Activated CD4-positive, alpha-beta T cell treated with anti-CD3 and anti-CD28 coated beads for 36 hours (primary cell): ENCODE measurements at regions of chr14 and their contacts with region 1.

Region 1: DNA sequence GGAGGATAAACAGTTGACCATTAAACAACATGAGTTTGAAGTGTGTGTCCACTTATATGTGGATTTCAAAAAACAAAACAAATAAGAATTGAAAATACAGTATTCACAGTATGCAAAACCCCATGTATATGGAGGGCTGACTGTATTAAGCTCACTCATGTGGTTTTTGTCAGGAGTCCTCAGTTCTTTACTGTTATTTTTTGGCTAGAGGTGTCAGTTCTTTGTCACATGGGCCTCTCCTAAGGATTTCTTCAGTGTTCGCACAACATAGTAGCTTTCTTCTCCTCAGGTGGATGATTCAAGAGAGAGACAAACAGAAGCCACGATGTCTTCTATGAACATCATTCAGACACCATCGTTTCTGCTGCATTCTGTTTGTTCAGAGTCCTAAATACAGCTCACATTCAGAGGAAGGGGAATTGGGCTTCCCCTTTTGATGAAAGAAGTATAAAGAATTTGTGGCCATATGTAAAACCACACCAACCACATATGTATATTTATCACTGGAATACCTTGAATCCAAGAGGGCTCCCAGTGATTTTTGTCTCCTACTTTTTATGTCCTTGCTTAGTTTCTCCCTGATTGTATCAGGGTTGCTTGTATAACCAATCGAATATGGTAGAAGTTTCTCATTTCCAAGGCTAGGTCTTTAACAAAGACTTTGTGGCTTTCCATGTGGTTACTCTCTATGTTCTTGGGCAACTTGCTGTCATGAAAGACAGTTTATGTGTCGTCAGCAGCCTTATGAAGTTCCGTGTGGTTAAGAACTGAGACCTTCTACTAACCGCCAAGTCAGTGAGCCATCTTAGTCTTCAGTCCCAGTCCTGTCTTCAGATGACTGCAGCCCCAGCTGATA is 18.9 kb downstream of the MNAT1 start:
- DNase-seq: peak; percentile 71
- ATAC-seq: peak; percentile 94
- H3K4me3 Mint-ChIP-seq: peak overlapping the region; percentile 19
- H3K27ac Mint-ChIP-seq: peak overlapping the region; percentile 63
- H3K4me1 Mint-ChIP-seq: peaks cover 40% of the 10 kb centered on the region
- H3K27me3 Mint-ChIP-seq: peaks cover 12% of the 10 kb centered on the region

Region 2: DNA sequence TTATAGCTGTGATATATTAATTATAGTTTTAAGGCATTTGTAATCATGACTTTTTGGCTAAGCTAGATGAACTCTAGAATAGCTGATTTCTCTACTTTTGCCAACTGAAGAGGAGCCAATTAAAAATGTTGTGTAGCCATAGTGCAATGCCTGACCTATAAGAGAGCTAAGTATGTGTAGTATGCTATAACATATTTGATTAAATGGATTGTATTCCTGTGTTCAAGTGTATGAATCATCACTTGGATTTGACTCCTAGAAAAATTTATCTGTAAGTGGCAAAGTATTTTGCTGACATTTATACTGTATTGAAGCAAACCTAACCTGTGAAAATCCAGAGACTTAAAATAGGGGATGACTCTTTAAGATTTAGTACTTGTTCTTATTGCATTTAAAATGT is 627.6 kb before region 1 on chr14:
- CTCF ChIA-PET with region 1: no interaction called
- POLR2A ChIA-PET with region 1: no interaction called
- intact Hi-C with region 1: no loop called
- DNase-seq: no peak
- ATAC-seq: no peak
- H3K4me3 Mint-ChIP-seq: no peak overlapping the region
- H3K27ac Mint-ChIP-seq: no peak overlapping the region
- H3K4me1 Mint-ChIP-seq: no peaks in the 10 kb centered on the region
- H3K27me3 Mint-ChIP-seq: no peaks in the 10 kb centered on the region

Region 3: DNA sequence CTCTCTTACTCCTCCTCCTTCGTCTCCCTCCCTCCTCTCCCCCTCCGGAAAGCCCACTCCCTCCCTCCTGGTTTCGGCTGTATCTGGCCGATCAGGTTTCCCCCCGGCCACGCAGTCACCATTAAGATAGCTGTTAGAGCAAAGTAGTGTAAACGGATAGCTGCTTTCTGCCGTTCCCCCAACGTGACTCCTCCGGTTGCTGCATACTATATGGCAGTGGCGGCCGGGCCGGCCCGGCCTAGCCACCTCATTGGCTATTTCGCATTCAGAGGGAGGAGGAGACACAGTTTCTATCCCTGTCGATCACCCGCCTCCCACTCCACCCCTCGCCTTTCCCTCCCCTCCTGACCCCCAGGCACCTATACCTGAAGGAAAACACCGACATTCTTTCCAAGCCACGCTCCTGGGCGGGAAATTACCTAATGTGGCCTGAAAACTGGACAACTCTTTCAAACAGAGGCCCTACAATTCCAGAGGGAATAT is 29.3 kb before region 1 on chr14 and contains the start of gene SIX4:
- CTCF ChIA-PET with region 1: interaction called, 6 read pairs
- POLR2A ChIA-PET with region 1: no interaction called
- intact Hi-C with region 1: loop called in 1 of 2 experiments (anchors 1 kb)
- DNase-seq: peak; percentile 47
- ATAC-seq: peak; percentile 38
- H3K4me3 Mint-ChIP-seq: peak within 1 kb of the TSS; percentile 77
- H3K27ac Mint-ChIP-seq: no peak within 1 kb of the TSS
- H3K4me1 Mint-ChIP-seq: peaks cover 16% of the 10 kb centered on the region
- H3K27me3 Mint-ChIP-seq: peaks cover 68% of the 10 kb centered on the region
- total RNA-seq, gene SIX4: 0.11 TPM in 1 of 2 experiments, not detected in the other

Region 4: DNA sequence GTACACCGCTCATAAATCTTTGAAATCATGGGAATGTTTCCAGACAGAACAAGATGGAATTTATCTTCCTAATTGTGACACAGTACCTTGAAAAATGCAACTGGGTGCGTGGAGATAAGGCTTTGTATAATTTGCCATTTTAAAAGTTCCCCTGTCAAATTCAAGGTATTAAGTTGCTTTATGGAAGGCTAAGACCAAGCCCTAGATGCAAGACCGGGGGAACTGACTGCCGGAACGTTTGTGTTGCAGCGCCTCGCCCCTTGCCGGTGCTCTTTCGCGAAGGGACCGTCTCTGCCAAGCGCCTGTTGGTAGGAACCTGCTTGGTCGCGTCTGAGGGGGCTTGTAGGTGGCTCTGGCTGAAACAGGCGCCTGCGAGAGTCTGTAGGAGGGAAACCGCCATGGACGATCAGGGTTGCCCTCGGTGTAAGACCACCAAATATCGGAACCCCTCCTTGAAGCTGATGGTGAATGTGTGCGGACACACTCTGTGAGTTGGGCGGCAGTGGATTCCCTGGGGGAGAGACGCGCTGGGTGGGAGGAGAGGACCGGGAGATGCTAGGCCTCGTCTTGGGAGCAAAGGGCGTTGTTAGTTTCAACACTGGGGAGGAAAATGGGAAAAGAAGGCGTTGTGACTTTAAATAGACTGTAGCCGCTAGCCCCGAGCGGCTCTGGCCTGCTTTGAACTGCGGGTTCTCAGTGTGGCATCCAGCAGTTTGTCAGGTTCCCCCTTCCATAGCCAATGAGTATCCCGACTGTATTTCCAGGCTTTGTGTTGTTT is 18.8 kb before region 1 on chr14 and contains the start of gene MNAT1:
- CTCF ChIA-PET with region 1: interaction called, 7 read pairs
- POLR2A ChIA-PET with region 1: no interaction called
- intact Hi-C with region 1: loop called (anchors 1 to 2 kb)
- DNase-seq: peak; percentile 88
- ATAC-seq: peak; percentile 96
- H3K4me3 Mint-ChIP-seq: peak within 1 kb of the TSS; percentile 99
- H3K27ac Mint-ChIP-seq: peak within 1 kb of the TSS; percentile 86
- H3K4me1 Mint-ChIP-seq: peaks cover 18% of the 10 kb centered on the region
- H3K27me3 Mint-ChIP-seq: peaks cover 15% of the 10 kb centered on the region
- total RNA-seq, gene MNAT1: 36.2 to 40.3 TPM

Region 5: GRCh38 chr14:60859525-60859924 is 106.0 kb after region 1 on chr14:
- CTCF ChIA-PET with region 1: no interaction called
- POLR2A ChIA-PET with region 1: interaction called, 4 read pairs
- intact Hi-C with region 1: loop called in 1 of 2 experiments (anchors 2 kb)
- DNase-seq: no peak
- ATAC-seq: peak; percentile 88
- H3K4me3 Mint-ChIP-seq: no peak overlapping the region
- H3K27ac Mint-ChIP-seq: no peak overlapping the region
- H3K4me1 Mint-ChIP-seq: peaks cover 19% of the 10 kb centered on the region
- H3K27me3 Mint-ChIP-seq: no peaks in the 10 kb centered on the region

Region 6: GRCh38 chr14:60965402-60965801 is 211.9 kb after region 1 on chr14:
- CTCF ChIA-PET with region 1: no interaction called
- POLR2A ChIA-PET with region 1: no interaction called
- intact Hi-C with region 1: loop called in 1 of 2 experiments (anchors 5 kb)
- DNase-seq: peak; percentile 12
- ATAC-seq: peak; percentile 92
- H3K4me3 Mint-ChIP-seq: no peak overlapping the region
- H3K27ac Mint-ChIP-seq: peak overlapping the region; percentile 26
- H3K4me1 Mint-ChIP-seq: peaks cover 9% of the 10 kb centered on the region
- H3K27me3 Mint-ChIP-seq: no peaks in the 10 kb centered on the region